Activated CD8-positive, alpha-beta T cell treated with anti-CD3 and anti-CD28 coated beads for 36 hours (primary cell): ENCODE measurements at regions of chr20 and their contacts with region 1.

Region 1: GRCh38 chr20:45934586-45935415 is at the start of gene PCIF1:
- DNase-seq: peak; percentile 99
- ATAC-seq: peak; percentile 84
- H3K4me3 Mint-ChIP-seq: peak within 1 kb of the TSS; percentile 95
- H3K27ac Mint-ChIP-seq: peak within 1 kb of the TSS; percentile 96
- H3K4me1 Mint-ChIP-seq: peaks cover 25% of the 10 kb centered on the region
- H3K27me3 Mint-ChIP-seq: no peaks in the 10 kb centered on the region
- CTCF ChIP-seq: no peak
- total RNA-seq, gene PCIF1: 27.8 to 29.5 TPM

Region 2: DNA sequence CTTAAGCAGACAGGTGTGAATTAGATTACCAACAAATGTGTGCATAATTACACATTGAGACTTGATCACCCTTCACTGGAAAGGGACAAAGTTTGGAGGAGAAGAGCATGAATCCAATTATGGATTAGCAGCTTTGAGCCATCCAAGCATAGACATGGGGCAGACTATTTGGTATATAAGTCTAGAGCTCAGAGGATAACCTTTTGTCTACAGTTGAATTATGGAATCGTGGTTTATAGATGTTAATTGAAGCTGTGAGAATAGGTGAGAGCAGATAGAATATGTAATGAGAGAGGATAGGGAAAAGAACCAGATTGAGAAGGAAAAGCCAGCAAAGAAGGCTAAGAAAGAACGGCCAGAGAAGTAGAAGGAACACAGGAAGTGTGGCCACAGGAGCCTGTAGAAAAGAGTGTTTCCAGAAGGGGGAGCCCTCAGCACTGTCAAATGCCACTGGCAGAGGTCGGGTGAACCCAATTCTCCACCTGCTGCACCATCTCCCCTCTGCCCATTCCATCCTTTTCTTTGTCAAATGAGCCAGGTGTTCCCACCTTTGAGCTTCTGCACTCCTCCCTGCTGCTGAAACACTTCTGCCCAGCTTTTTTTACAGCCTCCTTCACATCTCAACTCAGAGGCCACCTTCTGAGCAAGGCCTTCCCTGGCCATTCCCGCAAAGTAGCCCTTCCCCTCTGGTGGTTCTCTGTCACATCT is 135.7 kb before region 1 on chr20:
- CTCF ChIA-PET with region 1: interaction called, 10 read pairs
- POLR2A ChIA-PET with region 1: no interaction called
- intact Hi-C with region 1: no loop called
- DNase-seq: peak; percentile 83
- ATAC-seq: peak; percentile 99
- H3K4me3 Mint-ChIP-seq: no peak overlapping the region
- H3K27ac Mint-ChIP-seq: peak overlapping the region; percentile 22
- H3K4me1 Mint-ChIP-seq: peaks cover 6% of the 10 kb centered on the region
- H3K27me3 Mint-ChIP-seq: no peaks in the 10 kb centered on the region
- CTCF ChIP-seq: peak; percentile 79

Region 3: DNA sequence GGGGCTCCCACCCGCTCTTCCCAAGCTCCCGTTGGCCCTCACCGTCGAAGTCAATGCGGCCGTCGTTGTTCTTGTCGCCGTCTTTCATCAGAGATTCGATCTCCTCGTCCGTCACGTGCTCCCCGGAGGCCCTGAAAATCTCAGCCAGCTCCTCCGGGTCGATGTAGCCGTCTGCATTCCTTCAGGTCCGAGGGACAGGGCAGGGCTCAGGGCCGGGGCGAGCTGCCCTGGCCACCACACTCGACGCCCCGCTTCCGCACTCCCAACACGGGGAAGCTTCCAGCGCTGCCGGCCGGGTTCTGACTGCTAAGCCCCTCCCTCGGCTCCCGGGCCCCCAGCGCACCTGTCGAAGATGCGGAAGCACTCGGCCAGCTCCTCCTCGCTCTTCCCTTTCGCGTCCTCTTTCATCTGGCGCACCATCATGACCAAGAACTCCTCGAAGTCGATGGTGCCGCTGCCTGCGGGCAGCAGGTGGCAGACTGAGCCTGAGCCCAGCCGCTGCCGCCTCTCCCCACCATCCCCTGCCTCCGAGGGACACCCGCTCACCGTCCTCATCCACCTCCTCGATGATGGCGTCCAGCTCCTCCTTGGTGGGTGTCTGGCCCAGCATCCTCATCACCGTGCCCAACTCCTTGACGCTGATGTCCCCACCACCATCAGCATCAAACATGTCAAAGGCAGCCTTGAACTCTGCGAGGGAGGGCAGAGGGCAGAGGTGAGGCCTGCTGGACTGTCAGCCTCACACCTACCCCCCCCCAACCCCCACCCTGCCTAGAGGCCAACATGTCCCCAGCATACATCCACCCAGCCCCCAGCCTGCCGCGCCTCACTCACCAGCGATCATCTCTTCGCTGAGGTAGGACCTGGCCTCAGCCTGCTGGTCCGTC is 110.6 kb before region 1 on chr20:
- CTCF ChIA-PET with region 1: interaction called, 7 read pairs
- POLR2A ChIA-PET with region 1: interaction called, 4 read pairs
- intact Hi-C with region 1: loop called (anchors 10 kb)
- DNase-seq: peak; percentile 66
- ATAC-seq: peak; percentile 89
- H3K4me3 Mint-ChIP-seq: peak overlapping the region; percentile 47
- H3K27ac Mint-ChIP-seq: peak overlapping the region; percentile 62
- H3K4me1 Mint-ChIP-seq: peaks cover 12% of the 10 kb centered on the region
- H3K27me3 Mint-ChIP-seq: peaks cover 27% of the 10 kb centered on the region
- CTCF ChIP-seq: peak; percentile 36

Region 4: DNA sequence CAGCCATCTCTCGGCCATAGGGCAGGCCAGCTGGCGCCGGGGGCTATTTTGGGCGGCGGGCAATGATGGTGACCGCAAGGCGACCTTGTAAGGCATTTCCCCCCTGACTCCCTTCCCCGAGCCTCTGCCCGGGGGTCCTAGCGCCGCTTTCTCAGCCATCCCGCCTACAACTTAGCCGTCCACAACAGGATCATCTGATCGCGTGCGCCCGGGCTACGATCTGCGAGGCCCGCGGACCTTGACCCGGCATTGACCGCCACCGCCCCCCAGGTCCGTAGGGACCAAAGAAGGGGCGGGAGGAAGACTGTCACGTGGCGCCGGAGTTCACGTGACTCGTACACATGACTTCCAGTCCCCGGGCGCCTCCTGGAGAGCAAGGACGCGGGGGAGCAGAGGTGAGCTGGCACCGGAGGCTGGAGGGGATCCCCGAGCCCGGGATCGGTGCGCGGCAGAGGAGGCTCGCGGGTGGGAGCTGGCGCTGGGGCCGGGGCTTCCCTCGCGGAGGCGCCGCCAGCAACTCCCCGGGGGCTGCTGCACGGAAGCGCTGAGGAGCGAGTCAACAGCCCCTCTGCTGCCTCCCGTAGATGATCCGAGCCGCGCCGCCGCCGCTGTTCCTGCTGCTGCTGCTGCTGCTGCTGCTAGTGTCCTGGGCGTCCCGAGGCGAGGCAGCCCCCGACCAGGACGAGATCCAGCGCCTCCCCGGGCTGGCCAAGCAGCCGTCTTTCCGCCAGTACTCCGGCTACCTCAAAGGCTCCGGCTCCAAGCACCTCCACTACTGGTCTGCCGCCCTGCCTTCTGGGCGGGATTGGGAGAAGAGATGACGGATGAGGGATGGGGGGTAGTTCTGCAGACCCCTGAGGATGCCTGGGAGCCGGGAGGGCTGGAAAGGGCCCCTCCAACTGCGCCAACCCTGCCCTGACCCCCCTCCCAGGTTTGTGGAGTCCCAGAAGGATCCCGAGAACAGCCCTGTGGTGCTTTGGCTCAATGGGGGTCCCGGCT is 43.5 kb before region 1 on chr20 and contains the starts of genes CTSA and NEURL2:
- CTCF ChIA-PET with region 1: interaction called, 4 read pairs
- POLR2A ChIA-PET with region 1: interaction called, 59 read pairs
- intact Hi-C with region 1: no loop called
- DNase-seq: peak; percentile 95
- ATAC-seq: peak; percentile 70
- H3K4me3 Mint-ChIP-seq: peak within 1 kb of the TSS; percentile 88
- H3K27ac Mint-ChIP-seq: peak within 1 kb of the TSS; percentile 89
- H3K4me1 Mint-ChIP-seq: peaks cover 33% of the 10 kb centered on the region
- H3K27me3 Mint-ChIP-seq: no peaks in the 10 kb centered on the region
- CTCF ChIP-seq: no peak
- total RNA-seq, gene CTSA: 34.5 to 40.2 TPM
- total RNA-seq, gene NEURL2: 2.4 to 2.9 TPM

Region 5: DNA sequence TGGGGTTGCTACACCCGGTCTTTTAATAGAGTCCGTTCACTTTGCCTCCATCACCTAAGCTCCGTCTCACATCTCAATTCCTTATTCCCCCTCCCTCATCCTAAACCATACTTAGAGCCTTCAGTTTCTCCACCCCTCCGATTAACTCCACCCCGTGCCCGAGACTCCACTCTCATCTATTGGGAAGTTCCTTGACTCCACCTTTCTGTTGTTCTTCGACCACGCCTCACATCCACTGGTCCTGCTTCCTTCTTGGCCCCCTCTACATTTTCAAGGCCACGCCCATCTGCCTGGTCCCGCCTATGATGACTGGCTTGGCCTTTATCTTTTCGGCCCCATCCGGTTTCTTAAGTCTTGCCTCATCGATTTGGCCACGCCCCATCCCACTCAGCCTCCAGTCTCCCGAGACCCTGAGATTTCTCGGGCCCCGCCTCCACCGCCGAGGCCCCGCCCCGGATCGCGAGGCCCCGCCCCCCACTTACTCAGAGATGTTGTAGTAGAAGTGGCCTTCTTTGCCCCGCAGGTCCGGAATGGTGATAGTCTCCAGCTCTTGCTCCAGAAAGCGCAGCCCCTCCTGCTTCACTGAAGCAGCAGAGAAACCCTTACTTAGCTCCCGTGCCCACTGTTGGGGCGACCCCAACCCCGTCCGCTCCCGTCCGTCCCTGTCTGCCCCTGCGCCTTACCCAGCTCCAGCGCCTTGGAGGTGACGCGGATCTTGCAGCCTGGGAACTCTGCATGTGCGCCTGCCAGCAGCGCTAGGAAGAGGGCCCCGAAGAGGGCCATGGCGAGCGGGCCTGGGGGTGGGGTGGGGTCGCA is 23.9 kb before region 1 on chr20:
- CTCF ChIA-PET with region 1: interaction called, 3 read pairs
- POLR2A ChIA-PET with region 1: interaction called, 35 read pairs
- intact Hi-C with region 1: no loop called
- DNase-seq: peak; percentile 100
- ATAC-seq: peak; percentile 96
- H3K4me3 Mint-ChIP-seq: peak overlapping the region; percentile 86
- H3K27ac Mint-ChIP-seq: peak overlapping the region; percentile 79
- H3K4me1 Mint-ChIP-seq: peaks cover 17% of the 10 kb centered on the region
- H3K27me3 Mint-ChIP-seq: peaks cover 8% of the 10 kb centered on the region
- CTCF ChIP-seq: no peak

Region 6: DNA sequence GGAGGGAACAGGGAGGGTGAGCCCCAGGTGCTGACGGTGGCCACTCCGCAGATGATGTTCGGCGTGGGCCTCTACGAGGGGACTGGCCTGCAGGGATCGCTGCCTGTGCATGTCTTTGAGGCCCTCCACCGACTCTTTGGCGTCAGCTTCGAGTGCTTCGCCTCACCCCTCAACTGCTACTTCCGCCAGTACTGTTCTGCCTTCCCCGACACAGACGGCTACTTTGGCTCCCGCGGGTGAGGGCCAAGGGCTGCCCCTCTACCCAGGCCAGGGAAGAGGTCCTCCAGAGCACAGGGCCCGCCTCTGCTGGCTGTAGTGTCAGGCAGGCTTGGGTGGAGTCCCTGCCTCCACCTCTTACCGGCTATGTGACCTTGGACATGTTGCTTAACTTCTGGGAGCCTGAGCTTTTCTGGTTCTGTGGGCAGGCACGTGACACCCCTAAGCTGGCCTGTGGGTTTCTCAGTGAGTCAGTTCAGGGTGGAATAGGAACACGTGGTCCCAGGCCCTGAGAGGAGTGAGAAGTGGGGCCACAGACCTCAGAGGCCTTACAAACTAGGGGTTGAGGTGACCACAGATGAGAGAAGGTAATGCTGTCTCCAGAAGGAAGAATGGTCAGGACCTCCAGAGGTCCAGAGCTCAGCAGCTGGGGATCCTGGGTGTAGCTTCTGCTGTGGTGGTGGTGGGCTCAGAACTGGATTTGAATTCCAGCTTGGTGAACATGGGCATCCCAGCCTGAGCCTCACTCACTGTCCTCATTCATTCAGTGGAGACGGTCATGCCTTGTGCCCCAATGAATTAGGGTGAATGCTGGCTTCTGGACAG is 11.6 kb after region 1 on chr20:
- CTCF ChIA-PET with region 1: interaction called, 5 read pairs
- POLR2A ChIA-PET with region 1: interaction called, 119 read pairs
- intact Hi-C with region 1: no loop called
- DNase-seq: peak; percentile 60
- ATAC-seq: peak; percentile 52
- H3K4me3 Mint-ChIP-seq: no peak overlapping the region
- H3K27ac Mint-ChIP-seq: peak overlapping the region; percentile 65
- H3K4me1 Mint-ChIP-seq: peaks cover 13% of the 10 kb centered on the region
- H3K27me3 Mint-ChIP-seq: no peaks in the 10 kb centered on the region
- CTCF ChIP-seq: no peak